GM10248 (cell line): ENCODE measurements at regions of chr5 and their contacts with region 1.

Region 1: DNA sequence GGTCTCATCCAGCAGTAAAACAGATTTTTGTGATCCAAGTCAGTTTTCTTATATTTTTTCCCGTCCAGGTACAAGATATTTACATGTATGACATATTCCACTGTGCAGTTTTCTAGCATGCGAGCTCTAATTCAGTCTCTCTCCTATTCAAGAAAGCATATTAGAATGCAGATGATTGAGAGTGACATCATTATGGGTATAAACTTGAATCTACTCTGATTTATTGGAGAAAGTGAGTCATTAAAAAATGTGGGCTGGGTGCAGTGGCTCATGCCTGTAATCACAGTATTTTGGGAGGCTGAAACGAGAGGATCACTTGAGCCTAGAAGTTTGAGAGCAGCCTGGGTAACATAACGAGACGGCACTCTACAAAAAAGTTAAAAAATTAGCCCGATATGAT is 6.2 kb downstream of the FER start:
- DNase-seq: no peak
- CTCF ChIP-seq: no peak

Region 2: GRCh38 chr5:108769352-108769751 is 15.5 kb after region 1 on chr5:
- CTCF ChIA-PET with region 1: interaction called, 12 read pairs
- POLR2A ChIA-PET with region 1: no interaction called
- DNase-seq: no peak
- CTCF ChIP-seq: no peak